ENCODE measurements at regions of chr4 and their contacts with region 1.

Region 1: GRCh38 chr4:28225050-28225449 is 1364.4 kb downstream of the STIM2 start:
- DNase-seq: peak; percentile 55 to 63
- H3K4me3 ChIP-seq: no peak overlapping the region
- H3K4me3 Mint-ChIP-seq: no peak overlapping the region
- H3K27ac Mint-ChIP-seq: no peak overlapping the region
- H3K4me1 ChIP-seq: peaks cover 17% of the 10 kb centered on the region; the same call in 1 of the 2 replicates
- H3K4me1 Mint-ChIP-seq: peaks cover 9% of the 10 kb centered on the region
- H3K27me3 ChIP-seq: no peaks in the 10 kb centered on the region
- H3K27me3 Mint-ChIP-seq: no peaks in the 10 kb centered on the region
- CTCF ChIP-seq: peak; percentile 51 to 56

Region 2: GRCh38 chr4:27684610-27685011 is 540.4 kb before region 1 on chr4:
- CTCF ChIA-PET with region 1: no interaction called
- POLR2A ChIA-PET with region 1: no interaction called
- intact Hi-C with region 1: loop called (anchors 1 kb)
- DNase-seq: peak; percentile 63 to 73
- H3K4me3 ChIP-seq: no peak overlapping the region
- H3K4me3 Mint-ChIP-seq: no peak overlapping the region
- H3K27ac Mint-ChIP-seq: no peak overlapping the region
- H3K4me1 ChIP-seq: no peaks in the 10 kb centered on the region
- H3K4me1 Mint-ChIP-seq: no peaks in the 10 kb centered on the region
- H3K27me3 ChIP-seq: no peaks in the 10 kb centered on the region
- H3K27me3 Mint-ChIP-seq: peaks cover 5% of the 10 kb centered on the region
- CTCF ChIP-seq: peak; percentile 72 to 73

Region 3: GRCh38 chr4:28287837-28288236 is 62.8 kb after region 1 on chr4:
- CTCF ChIA-PET with region 1: no interaction called
- POLR2A ChIA-PET with region 1: no interaction called
- intact Hi-C with region 1: loop called (anchors 2 kb)
- DNase-seq: peak; percentile 39 to 50
- H3K4me3 ChIP-seq: no peak overlapping the region
- H3K4me3 Mint-ChIP-seq: no peak overlapping the region
- H3K27ac Mint-ChIP-seq: peak overlapping the region; percentile 16
- H3K4me1 ChIP-seq: peaks cover 25% of the 10 kb centered on the region
- H3K4me1 Mint-ChIP-seq: peaks cover 8% of the 10 kb centered on the region
- H3K27me3 ChIP-seq: no peaks in the 10 kb centered on the region
- H3K27me3 Mint-ChIP-seq: no peaks in the 10 kb centered on the region
- CTCF ChIP-seq: no peak

Region 4: GRCh38 chr4:28378109-28378830 is 153.2 kb after region 1 on chr4:
- CTCF ChIA-PET with region 1: no interaction called
- POLR2A ChIA-PET with region 1: no interaction called
- intact Hi-C with region 1: loop called (anchors 5 kb)
- DNase-seq: no peak
- H3K4me3 ChIP-seq: no peak overlapping the region
- H3K4me3 Mint-ChIP-seq: no peak overlapping the region
- H3K27ac Mint-ChIP-seq: no peak overlapping the region
- H3K4me1 ChIP-seq: no peaks in the 10 kb centered on the region
- H3K4me1 Mint-ChIP-seq: no peaks in the 10 kb centered on the region
- H3K27me3 ChIP-seq: no peaks in the 10 kb centered on the region
- H3K27me3 Mint-ChIP-seq: no peaks in the 10 kb centered on the region
- CTCF ChIP-seq: no peak

Region 5: GRCh38 chr4:28565396-28565795 is 340.3 kb after region 1 on chr4:
- CTCF ChIA-PET with region 1: no interaction called
- POLR2A ChIA-PET with region 1: no interaction called
- intact Hi-C with region 1: loop called (anchors 10 kb)
- DNase-seq: no peak
- H3K4me3 ChIP-seq: no peak overlapping the region
- H3K4me3 Mint-ChIP-seq: no peak overlapping the region
- H3K27ac Mint-ChIP-seq: no peak overlapping the region
- H3K4me1 ChIP-seq: no peaks in the 10 kb centered on the region
- H3K4me1 Mint-ChIP-seq: no peaks in the 10 kb centered on the region
- H3K27me3 ChIP-seq: no peaks in the 10 kb centered on the region
- H3K27me3 Mint-ChIP-seq: no peaks in the 10 kb centered on the region
- CTCF ChIP-seq: no peak

Region 6: GRCh38 chr4:28879178-28879577 is 654.1 kb after region 1 on chr4:
- CTCF ChIA-PET with region 1: no interaction called
- POLR2A ChIA-PET with region 1: no interaction called
- intact Hi-C with region 1: loop called (anchors 1 kb)
- DNase-seq: no peak
- H3K4me3 ChIP-seq: no peak overlapping the region
- H3K4me3 Mint-ChIP-seq: no peak overlapping the region
- H3K27ac Mint-ChIP-seq: no peak overlapping the region
- H3K4me1 ChIP-seq: no peaks in the 10 kb centered on the region
- H3K4me1 Mint-ChIP-seq: no peaks in the 10 kb centered on the region
- H3K27me3 ChIP-seq: no peaks in the 10 kb centered on the region
- H3K27me3 Mint-ChIP-seq: no peaks in the 10 kb centered on the region
- CTCF ChIP-seq: no peak